Uterus (tissue), 4 donors: ENCODE measurements at regions of chr12 and their contacts with region 1.

Region 1: GRCh38 chr12:55738123-55739024 is 4.5 kb upstream of the GDF11 start:
- DNase-seq: peak; percentile 85 to 90
- H3K4me3 ChIP-seq: peak overlapping the region; percentile 53 to 56
- H3K27ac ChIP-seq: peak overlapping the region; percentile 86 to 87
- H3K4me1 ChIP-seq: peaks cover 0 to 5% of the 10 kb centered on the region in 2 donors
- H3K27me3 ChIP-seq: no peaks in the 10 kb centered on the region
- CTCF ChIP-seq: peak; percentile 85 to 98 (median 92)
- POLR2A ChIP-seq: no peak

Region 2: GRCh38 chr12:55817346-55818139 is 79.2 kb after region 1 on chr12 and contains the starts of genes ORMDL2 and SARNP:
- intact Hi-C with region 1: loop called (anchors 10 kb)
- DNase-seq: peak; percentile 96 to 99
- H3K4me3 ChIP-seq: peak within 1 kb of the TSS; percentile 74 to 91
- H3K27ac ChIP-seq: peak within 1 kb of the TSS; percentile 85 to 87
- H3K4me1 ChIP-seq: peaks cover 3 to 10% of the 10 kb centered on the region in 2 donors
- H3K27me3 ChIP-seq: no peaks in the 10 kb centered on the region
- CTCF ChIP-seq: no peak
- POLR2A ChIP-seq: peak; percentile 65 to 69
- total RNA-seq, gene ORMDL2: 1.3 to 38.6 (median 7.5) TPM
- total RNA-seq, gene SARNP: 45.9 to 106 (median 66.6) TPM

Region 3: GRCh38 chr12:55940065-55940732 is 201.8 kb after region 1 on chr12:
- intact Hi-C with region 1: loop called (anchors 5 kb)
- DNase-seq: peak; percentile 84 to 87
- H3K4me3 ChIP-seq: no peak overlapping the region
- H3K27ac ChIP-seq: peak overlapping the region in 1 of 2 donors; percentile 22
- H3K4me1 ChIP-seq: no peaks in the 10 kb centered on the region
- H3K27me3 ChIP-seq: no peaks in the 10 kb centered on the region
- CTCF ChIP-seq: peak; percentile 85 to 90 (median 88)
- POLR2A ChIP-seq: no peak

Region 4: DNA sequence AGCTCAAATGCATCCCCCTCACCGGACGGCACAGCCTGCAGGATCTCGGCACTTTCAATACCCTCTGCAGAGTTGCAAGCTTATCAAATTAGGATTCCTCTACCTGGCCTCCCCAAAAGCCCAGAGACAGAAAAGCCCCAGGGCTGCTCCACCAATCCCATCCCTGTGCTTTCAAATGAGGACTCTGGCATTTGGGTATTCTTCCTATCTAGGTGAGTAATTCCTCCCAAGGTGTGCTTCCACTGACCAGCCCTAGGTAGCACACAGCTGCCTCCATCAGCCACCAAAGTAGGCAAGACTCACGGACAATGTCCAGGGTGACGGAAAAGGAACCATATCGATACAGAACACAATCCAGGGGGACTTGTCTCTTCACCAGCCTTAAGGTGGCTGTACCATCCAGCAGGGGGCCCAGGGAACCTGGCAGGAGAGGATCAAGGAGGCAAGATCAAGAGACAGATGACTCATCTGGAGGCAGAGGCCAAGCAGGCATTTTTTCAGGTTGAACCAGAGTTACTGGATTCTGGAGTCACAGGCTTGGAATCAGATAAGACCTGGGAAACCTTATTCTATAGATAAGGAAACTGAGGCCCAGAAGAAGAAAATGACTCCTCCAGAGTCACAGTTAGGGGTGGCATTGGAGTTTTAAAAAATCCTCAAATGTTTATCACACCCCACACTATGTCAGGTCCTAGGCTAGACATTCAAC is 217.6 kb after region 1 on chr12:
- intact Hi-C with region 1: no loop called
- DNase-seq: peak in 1 of 2 donors; percentile 27
- H3K4me3 ChIP-seq: no peak overlapping the region
- H3K27ac ChIP-seq: no peak overlapping the region
- H3K4me1 ChIP-seq: no peaks in the 10 kb centered on the region
- H3K27me3 ChIP-seq: no peaks in the 10 kb centered on the region
- CTCF ChIP-seq: no peak
- POLR2A ChIP-seq: no peak